HepG2 (cell line): ENCODE measurements at regions of chr6 and their contacts with region 1.

Region 1: DNA sequence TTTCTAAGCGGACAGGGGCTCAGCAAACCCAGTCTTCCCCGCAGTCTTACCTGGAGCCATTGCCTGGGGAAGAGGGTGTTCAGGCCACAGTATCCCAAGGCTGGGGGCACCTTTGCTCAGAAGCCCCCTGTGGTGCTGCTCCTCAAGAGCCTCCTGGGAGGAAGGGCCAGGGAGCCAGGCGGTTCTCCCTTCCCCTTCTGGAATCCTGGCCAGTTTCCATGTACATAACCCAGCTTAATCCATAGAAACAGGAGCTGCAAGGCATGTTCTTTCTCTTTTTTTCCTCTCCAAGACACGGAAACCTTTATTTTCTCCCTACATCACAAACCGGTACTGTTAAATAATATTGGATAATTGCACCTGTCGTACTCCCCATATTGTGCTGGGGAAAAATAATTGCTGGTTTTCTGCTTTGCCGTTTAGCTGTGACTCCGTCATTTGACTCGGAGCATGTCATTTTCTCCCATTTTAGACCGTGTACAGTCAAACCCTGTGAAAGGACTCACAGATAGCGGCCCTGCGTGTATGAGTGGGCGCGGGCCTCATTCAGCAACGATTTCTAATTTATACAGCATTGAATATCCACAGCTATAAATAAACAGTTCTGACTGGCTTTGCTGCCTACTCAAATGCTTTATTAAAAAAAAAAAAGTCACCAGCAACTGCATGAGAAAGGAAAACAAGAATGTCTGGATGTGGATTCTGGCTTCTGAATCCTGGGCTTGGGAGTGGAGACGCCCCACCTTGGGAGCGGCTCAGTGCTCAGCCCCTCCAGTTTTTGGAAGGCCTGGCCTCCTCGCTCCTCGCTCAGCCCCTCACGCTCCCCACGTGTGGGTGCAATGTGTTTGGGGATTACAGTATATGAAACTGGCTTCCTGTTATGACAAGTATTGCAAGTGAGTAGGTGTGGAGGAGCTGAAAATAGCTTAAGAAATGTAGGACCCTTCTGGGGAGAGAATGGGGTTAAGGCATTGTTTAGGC is 67.3 kb downstream of the ADTRP start:
- DNase-seq: no peak
- ATAC-seq: no peak
- H3K4me3 ChIP-seq: no peak overlapping the region
- H3K27ac ChIP-seq: no peak overlapping the region
- H3K4me1 ChIP-seq: no peaks in the 10 kb centered on the region
- H3K27me3 ChIP-seq: peaks cover 0 to 6% of the 10 kb centered on the region in 2 experiments; a peak in 2 of 5 replicates
- CTCF ChIP-seq: no peak
- EP300 ChIP-seq: no peak
- POLR2A ChIP-seq: no peak
- RAD21 ChIP-seq: no peak

Region 2: DNA sequence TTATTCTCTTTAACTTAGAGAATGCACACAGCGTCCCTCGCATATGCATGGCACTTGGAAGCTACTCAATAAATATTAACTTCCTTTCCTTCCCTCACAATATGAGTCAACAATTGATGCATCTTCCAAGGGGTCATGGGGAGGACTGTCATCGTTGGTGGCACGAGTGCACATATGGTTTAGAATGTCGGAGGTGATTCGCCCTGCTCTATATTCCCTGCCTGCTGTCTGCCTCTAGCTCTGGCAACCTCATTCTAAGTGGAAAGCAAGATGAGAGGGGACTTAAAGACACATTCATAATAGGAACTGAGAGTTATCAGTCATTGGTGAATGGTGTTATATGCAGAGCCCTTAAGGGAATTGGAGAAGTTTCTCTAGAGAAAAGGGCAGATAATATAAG is 917.6 kb before region 1 on chr6:
- CTCF ChIA-PET with region 1: no interaction called
- POLR2A ChIA-PET with region 1: no interaction called
- in situ Hi-C with region 1: no loop called
- intact Hi-C with region 1: no loop called
- DNase-seq: no peak
- ATAC-seq: no peak
- H3K4me3 ChIP-seq: no peak overlapping the region; a peak in 1 of 6 replicates
- H3K27ac ChIP-seq: peak overlapping the region; percentile 30
- H3K4me1 ChIP-seq: peaks cover 24% of the 10 kb centered on the region
- H3K27me3 ChIP-seq: no peaks in the 10 kb centered on the region
- CTCF ChIP-seq: no peak
- EP300 ChIP-seq: no peak
- POLR2A ChIP-seq: no peak
- RAD21 ChIP-seq: no peak

Region 3: GRCh38 chr6:11810039-11810541 is 98.8 kb after region 1 on chr6:
- CTCF ChIA-PET with region 1: no interaction called
- POLR2A ChIA-PET with region 1: no interaction called
- in situ Hi-C with region 1: no loop called
- intact Hi-C with region 1: loop called (anchors 10 kb)
- DNase-seq: no peak
- ATAC-seq: no peak
- H3K4me3 ChIP-seq: no peak overlapping the region
- H3K27ac ChIP-seq: no peak overlapping the region
- H3K4me1 ChIP-seq: no peaks in the 10 kb centered on the region
- H3K27me3 ChIP-seq: peaks cover 0 to 13% of the 10 kb centered on the region in 2 experiments; a peak in 3 of 5 replicates
- CTCF ChIP-seq: no peak
- EP300 ChIP-seq: no peak
- POLR2A ChIP-seq: no peak
- RAD21 ChIP-seq: no peak